ENCODE measurements at regions of chr10 and their contacts with region 1.

Region 1: DNA sequence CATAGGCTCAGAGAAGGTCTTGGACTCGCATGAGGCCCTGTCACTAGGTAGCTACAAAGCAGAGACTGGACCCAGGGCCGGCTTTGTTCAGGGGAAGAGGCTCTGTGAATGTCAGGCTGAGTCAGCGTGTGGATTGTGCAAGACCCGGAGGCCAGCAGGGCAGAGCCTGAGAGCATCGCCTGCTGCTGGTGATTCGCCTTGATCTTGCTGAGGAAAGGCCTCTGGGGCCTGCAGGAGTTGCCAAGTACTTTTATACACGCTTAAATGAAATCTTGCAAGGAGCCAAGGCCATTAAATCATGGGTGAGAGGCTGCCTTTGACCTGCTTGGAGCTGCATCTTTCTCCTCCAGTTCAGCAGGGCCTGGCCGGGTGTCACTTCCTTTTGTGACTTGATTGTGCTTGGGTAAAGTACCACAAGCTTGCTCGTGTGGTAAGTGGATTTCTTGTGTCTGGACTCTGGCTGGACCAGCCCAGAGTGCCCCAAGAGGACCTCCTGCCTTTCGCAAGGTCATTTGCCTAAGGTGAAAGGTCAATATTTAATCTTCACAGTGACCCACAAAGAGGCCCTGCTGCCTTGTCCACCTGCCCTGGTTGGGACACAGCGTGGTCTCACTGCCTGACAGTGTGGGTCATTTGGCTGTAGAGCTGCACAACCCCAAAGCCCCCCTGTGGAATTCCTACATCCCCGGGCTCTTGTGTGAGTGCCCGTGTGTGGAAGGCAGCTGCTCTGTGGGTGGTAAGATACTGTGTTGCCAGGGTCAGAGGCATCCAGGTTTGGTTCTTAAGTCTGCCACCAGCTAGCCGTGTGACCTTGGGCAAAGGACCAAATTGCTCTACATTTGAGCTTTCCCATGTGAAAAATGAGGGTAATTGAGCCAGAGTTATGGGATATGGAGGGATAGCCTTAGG is 38.6 kb upstream of the SH2D4B start:
- DNase-seq: no peak
- CTCF ChIP-seq: no peak

Region 2: DNA sequence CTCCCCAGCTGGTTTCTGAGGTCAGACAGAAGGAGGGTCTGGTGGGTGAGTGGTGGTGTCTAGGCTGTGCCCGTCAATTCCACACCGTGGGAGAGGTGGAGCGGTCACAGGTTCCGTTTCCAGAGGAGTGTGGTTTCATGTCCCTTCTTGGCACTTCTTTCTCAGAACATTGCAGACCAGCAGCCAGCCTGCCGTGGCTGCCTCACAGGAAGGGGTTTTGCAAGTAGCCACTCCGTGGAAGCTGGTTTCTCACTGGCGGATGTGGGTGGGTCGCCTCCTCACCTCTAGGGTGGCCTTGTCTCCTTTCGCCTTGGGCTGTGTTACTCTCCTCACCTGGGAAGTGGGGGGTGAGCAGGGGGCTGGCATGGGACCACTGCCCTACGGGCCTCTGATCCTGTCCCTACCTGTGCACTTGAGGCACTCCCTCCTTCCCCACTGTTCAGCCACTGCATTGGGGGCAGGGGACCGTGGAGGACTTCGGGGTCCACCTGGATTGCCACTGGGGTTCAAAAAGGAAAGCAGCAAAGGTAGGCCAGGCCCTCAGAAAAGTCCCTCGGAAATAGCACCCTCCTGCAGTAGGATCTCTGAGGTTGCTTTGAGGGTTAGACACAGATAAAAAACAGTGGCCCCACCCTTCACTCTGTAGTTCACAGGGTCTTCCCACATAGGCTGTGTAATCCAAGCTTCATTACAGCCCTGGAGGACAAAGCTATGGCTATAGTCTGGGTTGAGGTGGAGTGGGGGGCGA is 11.1 kb before region 1 on chr10:
- CTCF ChIA-PET with region 1: interaction called, 42 read pairs
- POLR2A ChIA-PET with region 1: no interaction called
- DNase-seq: no peak
- CTCF ChIP-seq: no peak

Region 3: GRCh38 chr10:80509403-80510161 is 10.5 kb after region 1 on chr10:
- CTCF ChIA-PET with region 1: interaction called, 42 read pairs
- POLR2A ChIA-PET with region 1: no interaction called
- DNase-seq: no peak
- CTCF ChIP-seq: no peak